PC-3 (cell line): ENCODE measurements at regions of chr10 and their contacts with region 1.

Region 1: GRCh38 chr10:132939957-132940790 is 2.2 kb downstream of the CFAP46 start:
- DNase-seq: peak; percentile 63
- ATAC-seq: peak; percentile 59
- H3K4me3 ChIP-seq: no peak overlapping the region
- H3K27ac ChIP-seq: no peak overlapping the region
- H3K4me1 ChIP-seq: no peaks in the 10 kb centered on the region
- H3K27me3 ChIP-seq: peaks cover 29% of the 10 kb centered on the region
- CTCF ChIP-seq: peak; percentile 79

Region 2: GRCh38 chr10:133124357-133125211 is 184.4 kb after region 1 on chr10:
- CTCF ChIA-PET with region 1: interaction called, 4 read pairs
- POLR2A ChIA-PET with region 1: no interaction called
- intact Hi-C with region 1: loop called (anchors 1 kb)
- DNase-seq: peak; percentile 41
- ATAC-seq: peak; percentile 93
- H3K4me3 ChIP-seq: no peak overlapping the region
- H3K27ac ChIP-seq: no peak overlapping the region
- H3K4me1 ChIP-seq: no peaks in the 10 kb centered on the region
- H3K27me3 ChIP-seq: peaks cover 17% of the 10 kb centered on the region
- CTCF ChIP-seq: peak; percentile 58